ENCODE measurements at regions of chr1 and their contacts with region 1.

Region 1: GRCh38 chr1:45011837-45012638 is at the start of gene UROD:
- DNase-seq: peak; percentile 94
- ATAC-seq: peak; percentile 93
- total RNA-seq, gene UROD: 63.4 to 65.1 TPM

Region 2: GRCh38 chr1:44822981-44823451 is 189.0 kb before region 1 on chr1:
- intact Hi-C with region 1: no loop called
- DNase-seq: peak; percentile 36
- ATAC-seq: no peak

Region 3: DNA sequence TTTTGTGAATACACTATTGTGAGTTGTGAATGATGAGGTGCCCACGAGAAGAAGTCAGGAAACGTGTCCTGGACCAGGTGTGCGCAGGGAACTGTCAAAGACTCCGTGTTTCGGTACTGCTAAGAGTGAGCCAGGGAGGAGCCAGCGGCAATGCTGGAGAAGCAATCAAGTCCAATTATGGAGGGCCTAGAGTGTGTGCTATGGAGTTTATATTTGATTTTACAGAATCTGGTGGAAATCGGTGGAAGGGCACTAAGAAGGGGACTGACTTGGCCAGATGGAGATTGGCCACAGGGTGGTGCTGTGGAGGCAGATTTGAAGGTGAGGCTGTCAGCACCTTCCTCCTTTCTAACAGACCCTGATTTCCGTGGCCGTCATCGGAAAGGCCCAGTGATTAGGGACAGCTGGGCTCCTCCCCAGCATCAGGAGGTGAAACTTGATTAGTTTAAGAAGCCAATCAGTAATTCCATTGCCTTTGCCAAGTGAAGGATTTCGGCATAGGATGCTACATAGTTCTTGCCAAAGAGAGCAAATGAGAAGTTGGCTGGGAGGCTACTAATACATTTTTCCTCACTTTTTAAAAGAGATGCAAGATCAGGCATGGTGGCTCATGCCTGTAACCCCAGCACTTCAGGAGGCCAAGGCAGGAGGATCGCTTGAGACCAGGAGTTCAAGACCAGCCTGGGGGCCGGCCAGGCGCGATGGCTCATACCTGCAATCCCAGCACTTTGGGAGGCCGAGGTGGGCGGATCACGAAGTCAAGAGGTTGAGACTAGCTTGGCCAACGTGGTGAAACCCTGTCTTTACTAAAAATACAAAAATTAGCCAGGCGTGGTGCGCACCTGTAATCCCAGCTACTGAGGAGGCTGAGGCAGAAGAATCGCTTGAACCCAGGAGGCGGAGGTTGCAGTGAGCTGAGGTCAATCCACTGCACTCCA is 176.0 kb before region 1 on chr1:
- intact Hi-C with region 1: loop called (anchors 10 kb)
- DNase-seq: peak; percentile 92
- ATAC-seq: peak; percentile 82 to 86

Region 4: GRCh38 chr1:45187725-45188124 is 175.7 kb after region 1 on chr1:
- intact Hi-C with region 1: no loop called
- DNase-seq: no peak
- ATAC-seq: no peak

Region 5: DNA sequence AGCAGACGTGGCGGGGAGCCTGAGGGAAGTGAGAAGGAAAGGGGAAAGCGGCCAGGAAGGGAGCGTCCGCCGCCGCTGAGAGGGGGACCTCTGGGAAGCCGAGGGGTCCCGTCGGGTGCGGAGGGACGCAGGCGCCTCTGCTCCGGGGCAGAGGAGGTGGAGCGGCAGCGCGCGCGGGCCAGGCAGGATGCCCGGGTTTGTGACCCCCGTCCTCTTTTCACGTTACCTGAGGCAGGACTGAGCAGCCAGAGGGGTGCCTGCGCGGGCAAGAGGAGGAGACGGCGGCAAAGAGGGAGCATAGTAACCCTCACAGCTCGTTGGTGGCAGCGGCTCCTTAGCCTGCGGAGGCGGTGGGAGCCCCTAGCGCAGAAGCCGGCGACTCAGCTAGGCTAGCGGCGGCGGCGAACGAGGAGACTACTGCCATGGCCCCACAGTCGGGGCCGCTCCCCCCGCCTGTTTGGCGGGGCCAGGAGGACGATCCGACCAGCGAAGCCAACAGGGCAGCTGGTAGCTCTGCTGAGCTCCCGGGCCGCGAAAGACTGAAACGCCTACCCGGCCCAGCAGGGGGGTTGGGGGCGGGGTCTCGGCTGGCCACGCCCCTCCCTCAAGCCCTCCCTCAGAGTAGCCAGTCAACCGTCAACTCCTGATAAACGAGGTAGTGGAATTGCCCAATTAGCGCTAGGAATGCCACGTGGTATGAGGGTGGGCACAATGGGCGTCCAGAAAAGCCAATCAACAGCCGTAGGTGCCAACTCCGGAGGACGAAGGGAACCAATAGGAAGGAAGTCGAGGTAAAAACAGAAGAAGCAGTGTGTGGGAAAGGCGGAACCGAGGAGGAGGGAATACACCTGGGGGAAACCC is 478.8 kb after region 1 on chr1 and contains the start of gene TESK2:
- intact Hi-C with region 1: loop called (anchors 5 to 10 kb)
- DNase-seq: peak; percentile 95
- ATAC-seq: peak; percentile 98
- total RNA-seq, gene TESK2: 1.4 to 2.8 TPM